BJ (cell line): ENCODE measurements at regions of chr5 and their contacts with region 1.

Region 1: GRCh38 chr5:137778772-137779564 is 24.8 kb upstream of the HNRNPA0 start:
- DNase-seq: no peak
- H3K4me3 ChIP-seq: no peak overlapping the region
- H3K27me3 ChIP-seq: peaks cover 3% of the 10 kb centered on the region
- CTCF ChIP-seq: peak; percentile 76

Region 2: GRCh38 chr5:137760330-137761188 is 18.4 kb before region 1 on chr5:
- CTCF ChIA-PET with region 1: interaction called, 11 read pairs
- POLR2A ChIA-PET with region 1: no interaction called
- DNase-seq: no peak
- H3K4me3 ChIP-seq: no peak overlapping the region
- H3K27me3 ChIP-seq: no peaks in the 10 kb centered on the region
- CTCF ChIP-seq: no peak

Region 3: GRCh38 chr5:137792303-137792702 is 13.3 kb after region 1 on chr5:
- CTCF ChIA-PET with region 1: interaction called, 11 read pairs
- POLR2A ChIA-PET with region 1: interaction called, 3 read pairs
- DNase-seq: no peak
- H3K4me3 ChIP-seq: no peak overlapping the region
- H3K27me3 ChIP-seq: no peaks in the 10 kb centered on the region; the same call in 1 of the 2 replicates
- CTCF ChIP-seq: no peak

Region 4: GRCh38 chr5:138065102-138065501 is 286.1 kb after region 1 on chr5:
- CTCF ChIA-PET with region 1: interaction called, 18 read pairs
- POLR2A ChIA-PET with region 1: no interaction called
- DNase-seq: no peak
- H3K4me3 ChIP-seq: no peak overlapping the region
- H3K27me3 ChIP-seq: no peaks in the 10 kb centered on the region; the same call in 1 of the 2 replicates
- CTCF ChIP-seq: peak; percentile 36; the same call in 1 of the 2 replicates

Region 5: GRCh38 chr5:138128334-138128733 is 349.4 kb after region 1 on chr5:
- CTCF ChIA-PET with region 1: interaction called, 35 read pairs
- POLR2A ChIA-PET with region 1: no interaction called
- DNase-seq: no peak
- H3K4me3 ChIP-seq: no peak overlapping the region
- H3K27me3 ChIP-seq: no peaks in the 10 kb centered on the region
- CTCF ChIP-seq: no peak

Region 6: DNA sequence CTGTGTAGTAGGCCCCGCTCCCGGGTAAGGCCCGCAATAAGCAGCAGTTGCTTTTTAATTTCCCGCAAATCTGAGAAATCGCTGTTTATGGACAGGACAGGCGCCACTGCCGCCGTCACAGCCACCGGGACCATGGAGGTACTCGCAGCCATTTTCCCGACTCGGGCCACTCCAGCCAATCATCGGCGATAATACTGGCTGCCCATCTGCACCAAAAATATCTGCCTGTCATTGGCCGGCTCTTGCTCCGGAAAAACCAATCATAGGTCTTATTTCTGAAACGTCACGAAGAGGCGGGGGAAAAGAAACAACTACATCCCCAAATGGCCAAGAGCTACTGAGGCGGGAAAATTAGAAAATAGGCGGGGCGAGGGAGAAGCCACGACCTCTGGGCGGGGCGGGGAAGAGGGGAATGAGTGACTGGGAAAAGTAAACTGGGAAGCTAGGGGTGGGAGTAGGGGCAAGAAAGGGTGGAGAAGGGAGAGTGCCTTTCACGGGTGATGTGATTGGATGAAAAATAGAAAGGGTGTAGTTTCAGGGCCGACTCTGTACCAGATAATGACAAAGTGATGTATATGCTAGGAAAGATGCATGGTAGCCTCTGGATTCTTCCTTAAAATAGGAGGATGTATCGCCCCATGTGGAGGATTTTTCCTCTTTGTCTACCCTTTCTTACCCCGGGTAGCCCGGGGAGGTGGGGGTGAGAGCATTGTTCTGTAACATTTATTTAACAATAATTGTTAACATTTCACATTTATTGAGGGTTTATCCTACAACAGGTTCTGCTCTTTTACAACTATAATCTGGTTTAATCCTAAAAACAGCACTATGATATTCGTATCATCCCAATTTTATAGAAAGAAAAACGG is 434.4 kb after region 1 on chr5 and contains the start of gene CDC23:
- CTCF ChIA-PET with region 1: no interaction called
- POLR2A ChIA-PET with region 1: no interaction called
- DNase-seq: peak; percentile 97
- H3K4me3 ChIP-seq: peak within 1 kb of the TSS; percentile 96
- H3K27me3 ChIP-seq: no peaks in the 10 kb centered on the region
- CTCF ChIP-seq: no peak
- polyA plus RNA-seq, gene CDC23: 20.9 and 38.3 TPM in 2 replicates